Left colon (tissue), 2 donors: ENCODE measurements at regions of chr17 and their contacts with region 1.

Region 1: DNA sequence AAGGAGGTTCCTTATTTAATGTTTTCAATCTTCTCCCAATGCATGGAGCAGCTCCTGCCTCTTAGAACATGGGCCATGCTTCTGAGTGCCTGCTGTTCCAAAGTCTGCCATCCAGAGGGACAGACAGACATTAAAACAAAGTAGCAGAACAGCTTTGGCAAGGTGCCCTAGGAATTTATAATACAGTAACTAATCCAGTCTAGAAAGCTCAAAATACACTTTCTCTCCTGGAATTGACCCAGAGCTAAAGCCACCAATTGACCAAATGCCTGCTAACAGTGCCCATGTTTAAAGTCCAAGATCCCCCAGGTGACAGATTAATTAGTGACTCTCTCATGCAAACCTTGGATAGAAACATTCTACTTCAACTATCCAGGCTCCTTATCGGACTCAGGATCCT is 11.1 kb upstream of the CHRNE start:
- DNase-seq: no peak
- ATAC-seq: peak; percentile 60

Region 2: GRCh38 chr17:4043862-4044261 is 870.1 kb before region 1 on chr17:
- intact Hi-C with region 1: no loop called
- DNase-seq: peak in 1 of 2 donors; percentile 59
- ATAC-seq: no peak

Region 3: GRCh38 chr17:4706121-4706520 is 207.9 kb before region 1 on chr17:
- intact Hi-C with region 1: no loop called
- DNase-seq: no peak
- ATAC-seq: no peak

Region 4: GRCh38 chr17:4747847-4748246 is 166.1 kb before region 1 on chr17:
- intact Hi-C with region 1: no loop called
- DNase-seq: no peak
- ATAC-seq: no peak

Region 5: DNA sequence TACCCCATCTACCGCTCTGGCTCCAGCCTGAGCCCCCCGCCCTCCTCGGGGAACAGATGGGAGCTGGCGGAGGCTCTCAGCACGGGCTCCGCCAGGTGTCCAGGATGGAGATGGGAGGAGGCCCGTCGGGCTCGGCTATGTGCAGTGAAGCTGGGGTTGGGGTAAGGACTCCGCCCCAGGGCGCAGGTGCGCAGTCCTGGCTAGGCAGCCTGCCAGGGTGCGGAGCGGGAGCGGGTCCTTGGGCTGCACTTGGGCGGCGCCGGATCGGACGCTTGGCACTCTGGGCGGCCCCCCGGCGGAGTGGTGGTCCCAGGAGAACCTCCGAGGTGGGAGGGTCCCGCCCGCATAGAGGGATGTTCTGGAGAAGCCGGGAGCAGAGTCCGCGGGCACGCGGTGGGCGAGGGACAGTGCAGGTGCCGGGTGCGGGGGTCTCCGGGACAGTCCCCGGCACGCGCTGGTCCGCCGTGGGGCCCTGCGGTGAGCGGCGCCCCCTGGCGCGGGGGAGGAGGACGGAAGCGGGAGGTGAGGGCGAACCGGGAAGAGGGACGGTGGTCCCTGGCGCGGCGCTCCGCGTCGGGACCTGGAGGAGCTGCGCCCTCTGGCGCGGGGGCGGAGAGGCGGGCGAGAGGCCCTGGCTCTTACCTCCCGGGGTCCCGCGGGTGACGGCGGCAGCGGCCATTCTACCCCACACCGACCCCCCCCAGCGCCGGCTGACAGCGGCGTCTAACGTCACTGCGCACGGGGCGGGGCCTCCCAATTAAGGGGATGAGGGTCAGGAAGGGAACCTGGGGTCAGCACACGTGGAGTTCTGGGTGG is 73.2 kb after region 1 on chr17 and contains the start of gene CAMTA2:
- intact Hi-C with region 1: loop called in 1 of 2 experiments (anchors 10 kb)
- DNase-seq: peak; percentile 91 to 97
- ATAC-seq: peak; percentile 83
- total RNA-seq, gene CAMTA2: 49.1 to 52.2 TPM

Region 6: GRCh38 chr17:5437723-5438317 is 523.8 kb after region 1 on chr17:
- intact Hi-C with region 1: no loop called
- DNase-seq: no peak
- ATAC-seq: no peak